Pancreas (tissue), 10 donors: ENCODE measurements at regions of chr18 and their contacts with region 1.

Region 1: DNA sequence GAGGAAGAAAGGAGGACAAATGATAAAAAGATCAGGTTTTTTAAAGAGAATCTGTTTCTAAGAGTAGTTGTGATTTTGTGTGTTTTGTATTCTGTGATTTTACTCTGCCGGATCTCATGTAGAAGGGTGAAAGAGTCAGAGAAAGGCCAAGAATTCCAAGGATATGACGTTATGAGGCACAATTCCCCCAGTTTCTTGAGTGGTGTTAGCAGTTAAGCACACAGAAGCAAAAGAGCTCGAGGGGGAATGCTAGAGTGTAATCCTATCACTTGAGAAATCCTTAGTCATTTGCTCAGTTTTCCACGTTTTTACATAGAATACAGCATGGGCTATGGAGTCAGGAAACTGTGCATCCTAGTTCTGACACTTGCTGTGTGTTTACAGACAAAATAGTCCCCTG is 34.8 kb downstream of the METTL4 start:
- DNase-seq: no peak
- ATAC-seq: peak in 1 of 4 donors; percentile 41
- H3K4me3 ChIP-seq: no peak overlapping the region
- H3K27ac ChIP-seq: no peak overlapping the region
- H3K4me1 ChIP-seq: no peaks in the 10 kb centered on the region
- H3K27me3 ChIP-seq: no peaks in the 10 kb centered on the region
- CTCF ChIP-seq: no peak

Region 2: DNA sequence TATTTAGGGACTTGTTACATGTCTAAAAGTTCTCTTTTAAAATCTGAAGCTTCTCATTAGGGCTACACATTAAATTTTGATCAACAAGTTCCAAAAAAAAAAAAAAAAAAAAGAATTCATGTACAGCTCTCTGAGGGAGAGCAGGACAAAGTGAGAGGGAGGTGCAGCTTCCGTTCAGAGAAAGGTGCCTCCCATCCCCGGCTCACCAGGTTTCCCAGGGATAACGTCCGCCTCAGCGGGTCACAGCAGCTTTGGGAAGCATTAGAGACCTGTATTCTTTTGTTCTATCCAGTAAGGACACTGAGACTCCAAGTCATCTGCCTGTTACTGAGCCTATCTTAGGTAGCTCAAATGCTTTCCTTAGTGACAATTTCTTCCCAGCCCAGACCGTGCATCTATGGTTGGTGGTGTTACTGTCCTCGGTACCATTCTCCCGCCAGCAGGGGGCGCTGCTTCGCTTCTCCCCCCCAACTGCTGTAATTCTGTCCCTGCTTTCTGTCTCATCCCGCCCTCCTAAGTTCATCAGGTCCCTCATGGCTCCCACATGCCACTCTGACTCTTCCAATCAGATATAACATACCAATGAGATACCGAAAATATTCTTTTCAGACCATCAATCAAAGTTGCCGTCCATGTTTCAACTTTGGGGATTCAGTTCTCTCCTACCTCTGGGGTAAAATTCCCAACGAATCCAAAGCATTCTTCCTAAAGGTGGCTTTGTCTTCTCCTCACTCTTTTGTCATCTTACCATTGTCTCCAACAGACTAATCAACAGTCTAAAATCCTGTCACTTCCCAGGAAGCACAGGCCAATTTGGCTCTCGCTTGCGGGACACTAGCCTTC is 431.7 kb before region 1 on chr18:
- intact Hi-C with region 1: loop called in 1 of 3 experiments (anchors 10 kb)
- DNase-seq: peak in 5 of 6 donors; percentile 13 to 82 (median 34)
- ATAC-seq: peak; percentile 53 to 91 (median 84)
- H3K4me3 ChIP-seq: no peak overlapping the region
- H3K27ac ChIP-seq: no peak overlapping the region
- H3K4me1 ChIP-seq: no peaks in the 10 kb centered on the region
- H3K27me3 ChIP-seq: no peaks in the 10 kb centered on the region
- CTCF ChIP-seq: peak; percentile 63 to 75 (median 70)

Region 3: DNA sequence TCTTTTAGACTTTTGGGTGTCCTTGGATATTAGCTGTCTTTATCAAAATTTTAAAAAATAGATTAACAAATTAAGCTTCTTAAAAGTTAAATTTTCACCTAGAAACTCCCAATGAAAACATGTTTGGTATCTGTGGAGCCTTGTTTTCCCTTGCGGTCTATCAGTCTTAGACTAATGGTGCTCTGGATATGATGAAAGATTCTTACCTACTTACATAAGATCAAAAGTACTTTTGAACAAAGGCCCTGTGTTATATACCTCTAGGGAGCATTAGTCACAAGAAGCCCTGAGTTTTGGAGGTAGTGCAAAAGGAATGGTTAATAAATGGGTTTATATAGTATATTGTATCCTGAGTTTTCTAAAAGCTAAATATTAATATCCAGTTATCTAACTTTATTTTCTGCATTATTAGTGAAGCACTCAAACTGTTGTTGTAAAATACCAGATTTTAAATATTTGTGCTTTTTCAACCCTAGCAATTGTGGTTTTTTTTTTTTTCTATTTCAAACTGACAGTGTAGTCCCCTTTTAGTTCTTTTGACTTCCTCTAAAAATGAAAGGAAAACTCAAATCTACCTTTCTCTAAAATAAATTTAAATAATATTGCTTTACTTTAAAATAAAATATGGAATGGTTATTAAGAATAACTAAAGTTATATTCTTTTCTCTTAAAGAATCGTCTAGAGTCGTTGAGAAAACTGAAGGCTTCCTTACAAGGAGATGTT is 53.0 kb after region 1 on chr18:
- intact Hi-C with region 1: no loop called
- DNase-seq: no peak
- ATAC-seq: peak in 2 of 4 donors; percentile 46 to 52
- H3K4me3 ChIP-seq: no peak overlapping the region
- H3K27ac ChIP-seq: peak overlapping the region in 2 of 4 donors; percentile 19 to 35
- H3K4me1 ChIP-seq: no peaks in the 10 kb centered on the region
- H3K27me3 ChIP-seq: no peaks in the 10 kb centered on the region
- CTCF ChIP-seq: no peak